Activated CD4-positive, alpha-beta memory T cell treated with anti-CD3 and anti-CD28 coated beads for 36 hours (primary cell): ENCODE measurements at regions of chr2 and their contacts with region 1.

Region 1: DNA sequence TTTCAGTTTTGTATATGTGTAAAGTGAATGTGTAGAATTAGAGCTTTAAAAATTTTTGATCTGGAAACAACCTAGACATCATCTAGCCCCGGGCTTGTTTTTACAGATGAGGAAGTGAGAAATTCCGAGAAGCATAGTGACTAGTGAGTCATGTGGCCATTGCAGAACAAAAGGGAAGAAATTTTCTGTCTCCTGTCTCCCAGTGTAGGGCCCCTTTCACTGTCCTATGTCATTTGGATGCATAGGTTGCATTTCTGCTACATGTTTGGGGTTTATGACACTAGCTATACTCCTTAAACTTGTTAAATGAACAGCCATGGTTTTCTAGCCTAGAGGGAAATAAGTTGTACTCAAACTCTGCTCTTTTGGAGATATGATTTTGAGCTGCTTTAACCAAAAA is 84.6 kb downstream of the PLCL1 start:
- DNase-seq: peak; percentile 58
- H3K4me3 Mint-ChIP-seq: no peak overlapping the region
- H3K27ac Mint-ChIP-seq: peak overlapping the region; percentile 79
- H3K4me1 Mint-ChIP-seq: peaks cover 36% of the 10 kb centered on the region
- H3K27me3 Mint-ChIP-seq: no peaks in the 10 kb centered on the region

Region 2: DNA sequence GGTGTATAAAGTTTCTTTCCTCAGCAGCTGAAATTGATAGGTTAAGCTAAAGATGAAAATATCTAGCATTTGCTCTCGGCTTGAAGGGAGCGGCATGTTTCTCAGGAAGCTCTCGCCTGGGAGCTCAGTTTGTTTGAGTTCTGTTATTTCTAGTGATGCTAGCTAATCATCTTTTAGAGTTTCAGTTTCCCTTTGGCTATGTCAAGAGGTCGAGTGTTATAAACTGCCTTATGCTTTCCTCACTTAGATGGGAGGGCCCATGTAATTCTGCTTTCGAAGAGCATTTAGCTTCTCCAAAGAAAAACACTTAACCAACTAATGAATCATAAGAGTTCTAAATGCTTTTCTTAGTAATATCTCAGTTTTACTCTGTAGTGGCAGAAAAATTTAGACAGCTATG is 51.0 kb before region 1 on chr2:
- CTCF ChIA-PET with region 1: interaction called, 3 read pairs
- POLR2A ChIA-PET with region 1: interaction called, 10 read pairs
- intact Hi-C with region 1: loop called (anchors 1 kb)
- DNase-seq: peak; percentile 41
- H3K4me3 Mint-ChIP-seq: peak overlapping the region; percentile 52
- H3K27ac Mint-ChIP-seq: peak overlapping the region; percentile 71
- H3K4me1 Mint-ChIP-seq: peaks cover 46% of the 10 kb centered on the region
- H3K27me3 Mint-ChIP-seq: no peaks in the 10 kb centered on the region

Region 3: DNA sequence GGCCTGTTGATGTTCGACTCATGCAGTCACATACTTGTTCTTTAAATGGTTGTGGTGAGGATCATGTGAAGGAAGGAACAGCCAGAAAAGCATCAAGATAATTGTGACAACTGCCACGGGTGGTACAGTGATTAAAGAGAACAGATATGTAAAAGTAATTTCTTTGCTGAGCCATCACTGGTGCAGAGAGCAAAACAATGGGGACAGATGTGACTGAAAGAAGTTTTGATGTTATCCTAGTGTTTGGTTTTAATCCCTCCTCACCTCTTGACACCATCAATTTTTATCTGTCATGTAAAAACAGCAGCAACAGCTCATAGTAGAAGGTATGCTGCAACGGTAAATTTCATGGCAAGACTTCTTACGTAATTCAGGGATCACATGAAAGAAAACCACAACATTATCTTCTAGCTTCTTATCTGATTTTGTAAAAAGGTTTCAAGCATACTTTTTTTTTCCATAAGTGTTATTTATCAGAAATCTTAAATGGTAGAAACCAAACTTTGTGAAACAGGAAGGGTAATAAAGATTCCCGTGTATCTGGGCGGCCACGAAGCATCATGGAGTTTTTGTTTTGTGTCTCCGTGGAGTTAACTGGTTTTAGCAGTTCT is 19.4 kb before region 1 on chr2:
- CTCF ChIA-PET with region 1: interaction called, 3 read pairs
- POLR2A ChIA-PET with region 1: interaction called, 3 read pairs
- intact Hi-C with region 1: loop called (anchors 1 kb)
- DNase-seq: peak; percentile 48
- H3K4me3 Mint-ChIP-seq: peak overlapping the region; percentile 68
- H3K27ac Mint-ChIP-seq: peak overlapping the region; percentile 88
- H3K4me1 Mint-ChIP-seq: peaks cover 57% of the 10 kb centered on the region
- H3K27me3 Mint-ChIP-seq: no peaks in the 10 kb centered on the region

Region 4: DNA sequence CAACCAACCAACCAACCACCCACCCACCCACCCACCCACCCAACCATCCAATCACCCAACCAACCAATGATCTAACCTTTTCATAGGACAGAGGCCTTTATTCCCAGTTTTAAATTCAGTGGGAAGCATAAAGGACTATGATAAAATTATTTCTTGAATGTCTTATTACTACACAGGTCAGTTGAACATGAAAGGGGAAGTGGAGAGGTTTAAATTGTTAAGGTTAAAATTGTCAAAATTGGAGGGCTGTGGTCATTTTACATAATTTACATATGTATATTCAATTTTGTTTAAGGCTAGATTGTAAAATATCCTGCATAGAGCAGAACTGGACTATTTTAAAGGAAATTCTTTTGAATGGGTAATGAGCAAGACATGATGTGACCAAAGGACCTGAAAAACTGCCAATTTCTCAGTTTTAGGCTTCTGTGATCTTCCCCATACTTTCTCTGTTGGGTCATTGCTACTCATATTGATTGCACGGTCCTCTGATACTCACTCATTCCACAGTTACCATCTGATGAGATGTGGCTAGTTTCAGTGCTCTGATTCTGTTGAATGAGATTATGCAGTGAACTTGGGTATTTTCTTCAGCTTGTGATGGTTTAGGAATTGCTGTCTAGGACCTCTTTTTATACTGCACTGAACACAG is 42.7 kb after region 1 on chr2:
- CTCF ChIA-PET with region 1: no interaction called
- POLR2A ChIA-PET with region 1: no interaction called
- intact Hi-C with region 1: loop called (anchors 1 kb)
- DNase-seq: no peak
- H3K4me3 Mint-ChIP-seq: no peak overlapping the region
- H3K27ac Mint-ChIP-seq: no peak overlapping the region
- H3K4me1 Mint-ChIP-seq: peaks cover 46% of the 10 kb centered on the region
- H3K27me3 Mint-ChIP-seq: no peaks in the 10 kb centered on the region

Region 5: GRCh38 chr2:198004921-198005829 is 116.1 kb after region 1 on chr2:
- CTCF ChIA-PET with region 1: interaction called, 3 read pairs
- POLR2A ChIA-PET with region 1: no interaction called
- intact Hi-C with region 1: loop called (anchors 1 kb)
- DNase-seq: peak; percentile 62
- H3K4me3 Mint-ChIP-seq: peak overlapping the region; percentile 61
- H3K27ac Mint-ChIP-seq: peak overlapping the region; percentile 84
- H3K4me1 Mint-ChIP-seq: peaks cover 56% of the 10 kb centered on the region
- H3K27me3 Mint-ChIP-seq: no peaks in the 10 kb centered on the region